MCF 10A (cell line): ENCODE measurements at regions of chr3 and their contacts with region 1.

Region 1: GRCh38 chr3:53709860-53710674 is 136.2 kb downstream of the CHDH start:
- DNase-seq: peak; percentile 67
- H3K4me3 Mint-ChIP-seq: no peak overlapping the region
- H3K27ac Mint-ChIP-seq: no peak overlapping the region
- H3K4me1 Mint-ChIP-seq: no peaks in the 10 kb centered on the region
- H3K27me3 Mint-ChIP-seq: no peaks in the 10 kb centered on the region
- CTCF ChIP-seq: peak; percentile 79

Region 2: GRCh38 chr3:53114011-53114400 is 596.1 kb before region 1 on chr3:
- CTCF ChIA-PET with region 1: interaction called, 4 read pairs
- POLR2A ChIA-PET with region 1: no interaction called
- intact Hi-C with region 1: loop called (anchors 10 kb)
- DNase-seq: peak; percentile 82
- H3K4me3 Mint-ChIP-seq: no peak overlapping the region
- H3K27ac Mint-ChIP-seq: no peak overlapping the region
- H3K4me1 Mint-ChIP-seq: peaks cover 15% of the 10 kb centered on the region
- H3K27me3 Mint-ChIP-seq: no peaks in the 10 kb centered on the region
- CTCF ChIP-seq: peak; percentile 85

Region 3: DNA sequence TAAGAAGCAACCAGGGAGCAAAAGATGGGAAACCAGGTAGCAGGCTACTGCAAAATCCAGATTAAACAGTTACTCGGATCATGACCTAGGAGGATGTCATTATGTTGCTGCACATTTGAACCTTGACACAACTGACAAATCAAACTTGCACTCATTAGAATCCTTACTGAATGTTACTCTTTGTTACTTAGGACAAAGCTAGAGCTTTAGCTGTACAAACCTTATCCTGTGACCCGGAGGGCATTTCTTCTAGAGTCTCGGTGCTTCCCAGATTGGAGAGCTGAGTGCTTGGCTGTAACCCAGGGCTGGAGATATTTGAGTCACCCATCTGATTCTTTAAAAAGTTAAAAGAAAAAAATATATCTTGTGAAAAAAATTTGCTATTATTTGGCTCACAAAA is 406.1 kb before region 1 on chr3:
- CTCF ChIA-PET with region 1: interaction called, 44 read pairs
- POLR2A ChIA-PET with region 1: no interaction called
- intact Hi-C with region 1: loop called (anchors 1 kb)
- DNase-seq: no peak
- H3K4me3 Mint-ChIP-seq: no peak overlapping the region
- H3K27ac Mint-ChIP-seq: no peak overlapping the region
- H3K4me1 Mint-ChIP-seq: no peaks in the 10 kb centered on the region
- H3K27me3 Mint-ChIP-seq: no peaks in the 10 kb centered on the region
- CTCF ChIP-seq: no peak

Region 4: DNA sequence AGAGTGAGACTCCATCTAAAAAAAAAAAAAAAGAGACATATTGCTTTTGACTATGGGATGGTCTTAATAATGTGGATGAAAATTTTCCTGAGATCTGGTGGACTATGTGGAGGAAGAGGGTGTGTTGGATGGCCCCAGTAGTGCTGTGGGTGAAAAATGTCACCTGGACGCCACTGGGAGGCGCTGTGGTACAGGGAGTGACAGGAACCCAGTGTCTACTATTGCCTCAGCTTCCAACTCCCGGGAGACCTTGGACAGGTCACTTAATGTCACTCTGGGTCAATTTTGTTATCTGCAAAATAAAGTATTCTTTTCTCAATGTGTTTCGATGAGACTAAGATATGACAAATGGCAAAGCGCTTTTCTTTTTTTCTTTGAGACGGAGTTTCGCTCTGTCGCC is 335.0 kb before region 1 on chr3:
- CTCF ChIA-PET with region 1: interaction called, 84 read pairs
- POLR2A ChIA-PET with region 1: interaction called, 3 read pairs
- intact Hi-C with region 1: loop called (anchors 2 kb)
- DNase-seq: peak; percentile 83
- H3K4me3 Mint-ChIP-seq: no peak overlapping the region
- H3K27ac Mint-ChIP-seq: no peak overlapping the region
- H3K4me1 Mint-ChIP-seq: peaks cover 4% of the 10 kb centered on the region
- H3K27me3 Mint-ChIP-seq: peaks cover 26% of the 10 kb centered on the region
- CTCF ChIP-seq: peak; percentile 87

Region 5: GRCh38 chr3:53696401-53697150 is 13.5 kb before region 1 on chr3:
- CTCF ChIA-PET with region 1: interaction called, 46 read pairs
- POLR2A ChIA-PET with region 1: no interaction called
- intact Hi-C with region 1: no loop called
- DNase-seq: peak; percentile 11
- H3K4me3 Mint-ChIP-seq: no peak overlapping the region
- H3K27ac Mint-ChIP-seq: no peak overlapping the region
- H3K4me1 Mint-ChIP-seq: no peaks in the 10 kb centered on the region
- H3K27me3 Mint-ChIP-seq: peaks cover 47% of the 10 kb centered on the region
- CTCF ChIP-seq: no peak

Region 6: GRCh38 chr3:53721187-53722119 is 11.4 kb after region 1 on chr3:
- CTCF ChIA-PET with region 1: interaction called, 31 read pairs
- POLR2A ChIA-PET with region 1: no interaction called
- intact Hi-C with region 1: no loop called
- DNase-seq: no peak
- H3K4me3 Mint-ChIP-seq: no peak overlapping the region
- H3K27ac Mint-ChIP-seq: no peak overlapping the region
- H3K4me1 Mint-ChIP-seq: no peaks in the 10 kb centered on the region
- H3K27me3 Mint-ChIP-seq: peaks cover 44% of the 10 kb centered on the region
- CTCF ChIP-seq: no peak